HEK293 (cell line): ENCODE measurements at regions of chr15 and their contacts with region 1.

Region 1: GRCh38 chr15:79184465-79184892 is 93.9 kb upstream of the RASGRF1 start:
- H3K4me3 ChIP-seq: no peak overlapping the region
- H3K27ac ChIP-seq: no peak overlapping the region
- H3K4me1 ChIP-seq: peaks cover 3% of the 10 kb centered on the region
- CTCF ChIP-seq: peak; percentile 79

Region 2: DNA sequence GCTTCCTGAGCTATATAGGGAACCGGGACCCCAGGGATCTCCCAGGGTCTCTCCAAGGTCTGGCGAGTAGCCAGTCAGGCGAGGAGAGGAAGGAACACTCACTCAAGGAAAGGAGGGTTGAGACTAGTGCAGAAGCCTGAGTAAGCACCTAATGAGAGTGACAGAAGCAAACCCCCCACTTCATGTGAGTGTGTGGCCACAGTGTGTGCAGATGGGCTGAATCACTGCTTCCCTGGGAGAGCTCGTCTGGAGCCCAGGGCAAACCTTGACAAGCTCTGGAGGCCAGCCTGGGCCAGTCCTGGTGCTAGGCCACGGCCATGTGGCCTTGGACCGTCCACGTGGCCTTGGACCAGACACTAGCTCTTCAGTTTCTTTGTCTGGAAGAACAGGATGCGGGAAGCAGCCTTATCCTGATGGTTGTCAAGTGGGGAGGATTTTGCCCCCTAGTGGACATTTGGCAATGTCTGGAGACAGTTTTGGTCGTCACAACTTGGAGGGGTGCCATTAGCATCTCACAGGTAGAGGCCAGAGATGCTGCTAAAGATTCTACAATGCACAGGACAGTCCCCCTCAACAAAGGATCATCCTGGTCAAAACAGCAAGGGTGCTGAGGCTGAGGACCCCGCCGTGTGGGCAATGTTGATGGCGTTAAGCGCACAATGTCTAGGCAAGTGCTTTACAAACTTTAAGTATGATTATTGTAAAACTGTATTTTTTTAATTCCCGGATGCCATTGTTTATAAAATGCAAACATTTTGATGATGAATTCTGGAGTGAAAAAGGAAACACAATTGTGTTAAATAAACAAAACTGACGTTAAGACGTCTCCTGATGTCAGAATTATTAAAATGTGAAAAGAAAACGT is 204.8 kb before region 1 on chr15:
- CTCF ChIA-PET with region 1: interaction called, 20 read pairs
- POLR2A ChIA-PET with region 1: no interaction called
- H3K4me3 ChIP-seq: no peak overlapping the region
- H3K27ac ChIP-seq: no peak overlapping the region; the same call in 1 of the 2 replicates
- H3K4me1 ChIP-seq: no peaks in the 10 kb centered on the region
- CTCF ChIP-seq: peak; percentile 59; the same call in 1 of the 2 replicates

Region 3: DNA sequence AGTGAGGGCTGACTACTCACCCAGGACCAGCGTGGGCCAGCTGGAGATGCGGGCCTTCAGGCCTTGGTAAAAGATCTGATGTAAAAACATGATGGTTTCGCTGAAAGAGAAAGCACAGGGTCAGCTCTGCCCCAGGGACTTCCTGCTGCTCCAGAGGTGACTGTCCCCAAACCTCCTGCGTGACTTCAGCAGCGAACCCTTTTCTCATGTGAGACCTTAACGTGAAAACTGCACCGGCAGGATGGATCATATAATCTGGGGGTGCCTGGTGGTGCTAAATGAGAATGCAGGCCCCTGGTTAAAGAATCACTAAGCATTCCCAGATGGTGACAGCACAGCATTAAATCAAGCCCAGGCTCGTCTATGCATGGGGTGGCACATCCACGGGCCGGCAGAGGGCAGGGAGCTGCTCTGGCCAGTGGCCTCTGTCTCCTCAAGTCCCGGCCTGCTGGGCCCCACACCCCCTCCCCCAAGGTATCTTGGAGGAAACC is 149.3 kb before region 1 on chr15:
- CTCF ChIA-PET with region 1: interaction called, 455 read pairs
- POLR2A ChIA-PET with region 1: no interaction called
- H3K4me3 ChIP-seq: no peak overlapping the region
- H3K27ac ChIP-seq: no peak overlapping the region
- H3K4me1 ChIP-seq: no peaks in the 10 kb centered on the region
- CTCF ChIP-seq: no peak

Region 4: GRCh38 chr15:79130535-79131130 is 53.8 kb before region 1 on chr15:
- CTCF ChIA-PET with region 1: interaction called, 27 read pairs
- POLR2A ChIA-PET with region 1: no interaction called
- H3K4me3 ChIP-seq: no peak overlapping the region
- H3K27ac ChIP-seq: no peak overlapping the region
- H3K4me1 ChIP-seq: 0 out of 2 replicates have a peak, but pooled peaks cover 3% of the 10 kb centered on the region
- CTCF ChIP-seq: no peak

Region 5: DNA sequence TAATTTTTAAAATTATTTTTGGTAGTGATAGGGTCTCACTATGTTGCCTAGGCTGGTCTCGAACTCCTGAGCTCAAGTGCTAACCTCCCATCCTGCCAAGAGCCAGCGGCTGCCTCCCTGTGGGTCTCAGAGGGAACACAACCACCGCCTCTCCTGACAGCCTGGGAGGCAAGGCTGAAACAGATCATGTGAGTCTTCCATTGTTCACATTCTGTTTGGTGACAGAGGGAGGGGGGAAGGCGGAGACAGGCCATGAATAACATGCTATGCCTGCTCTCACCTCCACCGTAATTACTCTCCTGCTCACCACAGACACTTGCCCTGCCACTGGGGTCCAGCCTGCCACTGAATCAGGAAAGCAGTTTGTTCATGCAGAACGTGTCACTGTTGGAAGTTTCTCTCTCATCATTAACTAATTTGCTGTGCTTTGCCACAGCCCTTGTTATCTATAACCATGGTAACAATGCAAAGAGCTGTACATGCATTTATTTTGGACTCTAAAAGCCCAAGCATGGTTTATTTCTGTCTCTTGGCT is 15.5 kb before region 1 on chr15:
- CTCF ChIA-PET with region 1: interaction called, 49 read pairs
- POLR2A ChIA-PET with region 1: interaction called, 5 read pairs
- H3K4me3 ChIP-seq: no peak overlapping the region
- H3K27ac ChIP-seq: no peak overlapping the region
- H3K4me1 ChIP-seq: peaks cover 18% of the 10 kb centered on the region
- CTCF ChIP-seq: peak; percentile 37; the same call in 1 of the 2 replicates